ENCODE measurements at regions of chr12 and their contacts with region 1.

Region 1: GRCh38 chr12:70576346-70577282 is 60.6 kb downstream of the PTPRB start:
- DNase-seq: peak; percentile 85
- ATAC-seq: peak; percentile 90
- H3K4me3 ChIP-seq: no peak overlapping the region
- H3K27ac ChIP-seq: no peak overlapping the region
- H3K4me1 ChIP-seq: no peaks in the 10 kb centered on the region
- H3K27me3 ChIP-seq: no peaks in the 10 kb centered on the region
- CTCF ChIP-seq: peak; percentile 93
- POLR2A ChIP-seq: peak; percentile 51
- RAD21 ChIP-seq: peak; percentile 96

Region 2: DNA sequence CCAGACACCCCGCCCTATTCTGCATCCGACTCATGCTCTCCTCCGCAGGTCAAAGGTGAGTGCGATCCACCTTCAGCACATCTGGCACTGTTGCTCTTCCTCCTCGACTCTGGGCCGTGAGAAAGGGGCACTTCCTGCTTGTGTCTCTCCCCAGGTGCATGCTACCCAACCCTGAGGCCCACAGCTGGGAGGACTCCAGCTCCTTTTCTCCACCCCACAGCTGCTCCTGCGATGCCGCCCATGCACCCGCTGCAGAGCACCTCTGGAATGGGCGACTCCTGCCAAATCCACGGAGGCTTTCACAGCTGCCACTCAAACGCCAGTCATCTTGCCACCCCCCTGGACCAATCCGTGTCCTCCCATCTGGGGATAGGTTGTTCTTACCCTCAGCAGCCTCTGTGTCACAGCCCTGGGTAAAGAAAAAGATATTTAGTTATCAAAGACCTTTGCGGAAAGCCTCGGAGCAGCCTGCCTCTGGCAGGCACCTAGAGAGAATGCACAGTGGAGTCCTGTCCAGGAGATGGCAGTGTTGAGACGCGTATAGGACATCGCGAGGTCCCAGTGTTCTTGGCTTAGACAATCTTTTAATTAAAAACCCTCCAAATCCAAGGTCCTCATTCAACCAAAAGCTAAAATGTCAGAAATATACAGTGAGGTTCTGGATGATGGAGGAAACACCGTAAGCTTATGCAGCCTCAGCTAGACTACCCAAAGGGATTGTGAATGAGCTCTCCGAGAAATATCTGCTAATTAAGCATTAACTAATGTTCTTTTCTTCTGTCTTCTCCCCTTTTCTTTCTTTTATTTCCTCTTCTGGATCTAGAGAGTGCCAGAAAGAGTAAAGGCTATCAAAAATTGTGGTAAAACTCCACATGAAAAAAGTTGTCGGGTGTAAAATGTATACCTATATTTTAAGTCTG is 697.3 kb before region 1 on chr12:
- CTCF ChIA-PET with region 1: interaction called, 15 read pairs
- POLR2A ChIA-PET with region 1: no interaction called
- dilution Hi-C with region 1: no loop called
- in situ Hi-C with region 1: loop called (anchors 5 kb)
- intact Hi-C with region 1: loop called (anchors 1 kb)
- DNase-seq: peak; percentile 69
- ATAC-seq: peak; percentile 97
- H3K4me3 ChIP-seq: no peak overlapping the region
- H3K27ac ChIP-seq: no peak overlapping the region
- H3K4me1 ChIP-seq: no peaks in the 10 kb centered on the region
- H3K27me3 ChIP-seq: peaks cover 7% of the 10 kb centered on the region; the same call in 1 of the 2 replicates
- CTCF ChIP-seq: peak; percentile 93
- POLR2A ChIP-seq: no peak
- RAD21 ChIP-seq: peak; percentile 96

Region 3: GRCh38 chr12:69885658-69886057 is 691.0 kb before region 1 on chr12:
- CTCF ChIA-PET with region 1: interaction called, 14 read pairs
- POLR2A ChIA-PET with region 1: no interaction called
- dilution Hi-C with region 1: no loop called
- in situ Hi-C with region 1: loop called (anchors 5 kb)
- intact Hi-C with region 1: no loop called
- DNase-seq: no peak
- ATAC-seq: no peak
- H3K4me3 ChIP-seq: no peak overlapping the region
- H3K27ac ChIP-seq: no peak overlapping the region
- H3K4me1 ChIP-seq: no peaks in the 10 kb centered on the region
- H3K27me3 ChIP-seq: no peaks in the 10 kb centered on the region; the same call in 1 of the 2 replicates
- CTCF ChIP-seq: no peak
- POLR2A ChIP-seq: no peak
- RAD21 ChIP-seq: no peak

Region 4: DNA sequence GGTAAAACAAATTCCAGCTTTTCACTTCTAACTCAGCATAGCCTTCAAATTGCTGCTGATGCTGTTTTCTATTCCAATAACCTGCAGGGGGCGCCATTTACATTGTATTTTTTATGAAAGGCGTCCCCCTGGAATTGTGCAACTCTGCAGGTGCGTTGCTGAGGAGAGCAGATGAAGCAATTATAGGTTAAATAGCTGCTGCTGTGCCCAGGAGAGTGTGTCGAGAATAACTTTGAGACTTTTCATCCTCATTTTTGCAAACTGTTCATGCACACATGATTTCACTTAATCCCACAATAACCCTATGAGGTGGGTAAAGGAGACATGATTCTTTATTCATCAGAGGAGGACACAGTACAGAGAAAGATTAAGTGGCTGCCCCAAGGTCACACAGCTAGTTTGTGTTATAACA is 675.9 kb before region 1 on chr12:
- CTCF ChIA-PET with region 1: interaction called, 10 read pairs
- POLR2A ChIA-PET with region 1: interaction called, 3 read pairs
- dilution Hi-C with region 1: no loop called
- in situ Hi-C with region 1: no loop called
- intact Hi-C with region 1: loop called (anchors 1 kb)
- DNase-seq: peak; percentile 54
- ATAC-seq: no peak
- H3K4me3 ChIP-seq: no peak overlapping the region
- H3K27ac ChIP-seq: no peak overlapping the region
- H3K4me1 ChIP-seq: peaks cover 2% of the 10 kb centered on the region; the same call in 1 of the 2 replicates
- H3K27me3 ChIP-seq: no peaks in the 10 kb centered on the region
- CTCF ChIP-seq: peak; percentile 78
- POLR2A ChIP-seq: no peak
- RAD21 ChIP-seq: peak; percentile 74

Region 5: DNA sequence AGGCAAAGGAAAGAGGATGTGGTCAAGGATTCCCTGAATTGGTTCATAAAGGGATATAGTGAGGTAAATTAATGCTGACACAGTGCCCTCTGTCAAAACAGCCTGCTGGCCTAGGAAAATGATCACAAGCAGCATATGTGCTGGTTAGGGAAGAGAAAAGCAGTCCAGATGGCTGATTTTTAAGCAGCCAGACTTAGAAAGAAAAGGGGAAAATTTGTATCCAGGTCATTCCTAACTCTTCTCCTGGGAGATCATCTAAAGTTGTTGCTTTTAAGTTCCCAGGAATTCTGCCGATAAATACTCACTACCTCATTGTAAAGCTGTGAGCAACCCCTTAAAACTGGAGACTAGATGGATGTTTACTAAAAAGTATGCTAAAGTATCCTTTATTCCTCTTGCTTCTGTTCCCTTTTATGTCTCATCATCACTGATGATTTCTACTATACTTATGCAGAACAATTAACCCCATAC is 379.8 kb before region 1 on chr12:
- CTCF ChIA-PET with region 1: no interaction called
- POLR2A ChIA-PET with region 1: no interaction called
- dilution Hi-C with region 1: no loop called
- in situ Hi-C with region 1: no loop called
- intact Hi-C with region 1: loop called (anchors 10 kb)
- DNase-seq: no peak
- ATAC-seq: peak; percentile 56
- H3K4me3 ChIP-seq: no peak overlapping the region
- H3K27ac ChIP-seq: no peak overlapping the region; the same call in 1 of the 2 replicates
- H3K4me1 ChIP-seq: no peaks in the 10 kb centered on the region; the same call in 1 of the 2 replicates
- H3K27me3 ChIP-seq: no peaks in the 10 kb centered on the region
- CTCF ChIP-seq: no peak
- POLR2A ChIP-seq: no peak
- RAD21 ChIP-seq: no peak

Region 6: GRCh38 chr12:70365648-70366518 is 210.7 kb before region 1 on chr12 and contains the start of gene KCNMB4:
- CTCF ChIA-PET with region 1: no interaction called
- POLR2A ChIA-PET with region 1: no interaction called
- dilution Hi-C with region 1: no loop called
- in situ Hi-C with region 1: no loop called
- intact Hi-C with region 1: loop called (anchors 2 kb)
- DNase-seq: peak; percentile 10
- ATAC-seq: peak; percentile 92
- H3K4me3 ChIP-seq: peak within 1 kb of the TSS; percentile 85
- H3K27ac ChIP-seq: no peak within 1 kb of the TSS
- H3K4me1 ChIP-seq: peaks cover 3% of the 10 kb centered on the region; the same call in 1 of the 2 replicates
- H3K27me3 ChIP-seq: peaks cover 15% of the 10 kb centered on the region; the same call in 1 of the 2 replicates
- CTCF ChIP-seq: no peak
- POLR2A ChIP-seq: no peak
- RAD21 ChIP-seq: no peak
- total RNA-seq, gene KCNMB4: 0.90 and 1.4 TPM in 2 replicates

Region 7: GRCh38 chr12:70427614-70428013 is 149.0 kb before region 1 on chr12:
- CTCF ChIA-PET with region 1: no interaction called
- POLR2A ChIA-PET with region 1: no interaction called
- dilution Hi-C with region 1: no loop called
- in situ Hi-C with region 1: no loop called
- intact Hi-C with region 1: no loop called
- DNase-seq: no peak
- ATAC-seq: no peak
- H3K4me3 ChIP-seq: no peak overlapping the region
- H3K27ac ChIP-seq: no peak overlapping the region
- H3K4me1 ChIP-seq: no peaks in the 10 kb centered on the region
- H3K27me3 ChIP-seq: no peaks in the 10 kb centered on the region
- CTCF ChIP-seq: no peak
- POLR2A ChIP-seq: no peak
- RAD21 ChIP-seq: no peak

Region 8: DNA sequence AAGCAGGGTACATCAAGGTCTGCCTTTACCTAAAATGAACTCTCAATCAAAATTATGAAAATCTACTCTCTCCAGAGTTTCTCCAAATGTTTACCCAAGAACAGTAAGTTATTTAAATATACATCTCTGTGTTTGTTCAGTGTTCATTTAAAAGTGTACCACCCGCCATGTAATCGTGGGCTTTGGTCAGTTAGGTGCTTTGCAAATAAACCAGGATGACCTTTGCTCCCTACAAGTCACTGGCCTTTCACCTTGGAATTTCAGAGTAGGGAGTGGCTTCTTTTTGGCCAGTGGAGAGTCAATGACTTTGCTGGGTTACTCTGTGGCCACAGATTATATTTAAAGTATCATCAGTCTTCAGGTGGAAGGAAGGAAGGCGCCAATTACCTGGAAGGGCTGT is 135.2 kb after region 1 on chr12:
- CTCF ChIA-PET with region 1: no interaction called
- POLR2A ChIA-PET with region 1: no interaction called
- dilution Hi-C with region 1: no loop called
- in situ Hi-C with region 1: no loop called
- intact Hi-C with region 1: no loop called
- DNase-seq: no peak
- ATAC-seq: no peak
- H3K4me3 ChIP-seq: no peak overlapping the region
- H3K27ac ChIP-seq: no peak overlapping the region
- H3K4me1 ChIP-seq: no peaks in the 10 kb centered on the region
- H3K27me3 ChIP-seq: no peaks in the 10 kb centered on the region
- CTCF ChIP-seq: no peak
- POLR2A ChIP-seq: no peak
- RAD21 ChIP-seq: no peak

Region 9: GRCh38 chr12:71710276-71711125 is 1133.9 kb after region 1 on chr12:
- CTCF ChIA-PET with region 1: no interaction called
- POLR2A ChIA-PET with region 1: no interaction called
- dilution Hi-C with region 1: no loop called
- in situ Hi-C with region 1: no loop called
- intact Hi-C with region 1: no loop called
- DNase-seq: peak; percentile 91
- ATAC-seq: peak; percentile 97
- H3K4me3 ChIP-seq: no peak overlapping the region
- H3K27ac ChIP-seq: no peak overlapping the region
- H3K4me1 ChIP-seq: peaks cover 2% of the 10 kb centered on the region; the same call in 1 of the 2 replicates
- H3K27me3 ChIP-seq: no peaks in the 10 kb centered on the region
- CTCF ChIP-seq: no peak
- POLR2A ChIP-seq: no peak
- RAD21 ChIP-seq: no peak

Measured in IMR-90 (cell line).